ENCODE measurements at regions of chr1 and their contacts with region 1.

Region 1: DNA sequence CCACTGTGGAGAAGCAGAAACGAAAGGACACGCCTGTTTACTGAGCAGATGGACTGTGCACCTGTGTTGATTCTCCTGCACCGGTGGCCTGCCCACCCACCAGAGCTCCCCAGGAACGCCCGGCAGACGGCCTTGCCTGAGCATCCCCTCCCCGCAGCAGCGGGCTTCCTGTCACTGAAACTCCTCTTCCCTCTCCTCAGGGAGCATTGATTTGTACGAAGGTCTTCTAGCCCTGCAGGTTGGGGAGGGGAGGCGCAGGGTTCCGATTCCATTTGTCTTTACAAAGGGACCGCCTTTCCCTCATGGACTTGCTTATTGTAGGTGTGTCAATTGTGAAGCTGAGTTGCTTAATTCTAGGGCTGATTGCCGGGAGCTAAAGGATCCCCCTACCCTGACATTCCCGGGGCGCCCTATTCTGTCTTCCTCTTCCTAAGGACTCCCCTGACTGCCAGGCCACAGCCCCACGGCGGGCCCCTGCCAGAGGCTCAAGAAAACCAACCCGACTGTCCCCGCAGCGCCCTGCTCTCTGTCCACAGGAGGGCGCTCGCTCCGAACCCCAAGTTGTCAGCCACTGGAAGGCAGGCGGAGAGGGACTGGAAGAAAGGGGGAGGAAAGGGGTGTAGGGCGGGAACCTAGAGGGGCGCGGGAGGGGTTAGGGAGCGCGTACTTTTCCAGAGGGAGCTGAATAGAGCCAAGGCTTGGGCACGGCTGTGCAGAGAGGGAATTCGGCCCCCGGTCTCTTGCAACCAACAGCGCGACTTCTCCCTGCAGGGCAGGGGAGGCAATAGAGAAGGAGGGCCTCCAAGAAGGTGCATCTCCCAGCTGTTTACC is 2.8 kb downstream of the S100A6 start:
- DNase-seq: peak; percentile 52
- H3K4me3 ChIP-seq: peak overlapping the region; percentile 98
- H3K27ac ChIP-seq: peak overlapping the region; percentile 96
- H3K27me3 ChIP-seq: no peaks in the 10 kb centered on the region
- CTCF ChIP-seq: peak; percentile 88

Region 2: DNA sequence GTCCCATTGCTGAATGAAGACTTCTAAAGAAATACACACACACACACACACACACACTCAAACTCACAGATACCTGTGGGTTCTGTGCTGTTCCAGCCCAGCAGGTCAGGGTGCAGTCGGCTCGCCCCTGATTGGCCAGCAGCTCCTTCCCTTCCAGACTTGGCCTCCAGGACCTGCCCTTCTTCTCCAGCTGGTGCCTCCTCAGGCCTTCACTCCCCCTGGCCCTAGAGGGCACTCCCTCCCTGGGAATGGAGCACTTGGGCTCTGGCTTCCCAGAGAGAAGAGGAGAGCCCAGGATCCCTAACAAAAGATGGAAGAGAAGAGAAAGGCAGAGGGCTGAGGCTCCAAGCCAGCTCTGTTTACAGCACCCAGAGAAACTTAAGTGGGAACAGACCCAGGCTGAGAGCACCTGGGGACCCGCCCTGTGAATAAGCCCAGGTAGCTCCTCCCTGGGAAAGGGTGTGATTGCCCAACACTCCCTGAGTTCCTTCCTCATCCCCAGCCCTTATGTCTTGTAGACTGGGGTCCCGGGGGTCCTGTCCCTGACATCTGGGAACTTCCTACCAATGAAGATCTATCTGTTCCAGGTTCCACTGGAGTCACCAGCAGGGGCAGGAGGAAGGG is 220.3 kb before region 1 on chr1 and contains the start of gene PGLYRP3:
- CTCF ChIA-PET with region 1: no interaction called
- POLR2A ChIA-PET with region 1: no interaction called
- DNase-seq: no peak
- H3K4me3 ChIP-seq: no peak within 1 kb of the TSS
- H3K27ac ChIP-seq: no peak within 1 kb of the TSS
- H3K27me3 ChIP-seq: no peaks in the 10 kb centered on the region
- CTCF ChIP-seq: no peak
- polyA plus RNA-seq, gene PGLYRP3: not detected in 2 replicates

Region 3: DNA sequence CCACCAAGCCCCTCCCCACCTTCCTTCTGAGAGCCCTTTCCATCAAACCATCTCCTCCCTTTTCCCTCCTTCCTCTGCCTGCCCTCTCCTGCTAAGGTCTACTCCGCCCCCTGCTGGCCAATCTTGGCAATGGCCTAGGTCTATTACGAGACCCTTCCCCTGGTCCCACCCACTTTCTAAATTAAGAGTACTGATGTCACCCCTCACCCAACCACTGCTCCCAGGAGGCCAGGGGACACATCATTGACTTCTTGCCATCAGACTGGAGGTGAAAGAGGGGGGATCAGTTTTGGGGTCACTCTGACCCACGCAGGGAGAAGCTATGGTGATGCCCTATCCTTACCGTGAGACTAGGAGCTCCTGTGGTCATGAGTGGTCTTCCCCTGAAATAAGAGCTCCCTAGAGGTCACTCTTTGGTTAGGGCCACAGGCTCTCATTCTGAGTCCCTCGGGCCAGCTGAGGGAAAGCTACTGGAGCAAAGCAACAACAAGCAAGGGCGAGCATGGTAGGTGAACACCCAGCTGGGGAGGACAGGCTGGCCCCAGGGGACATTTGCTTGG is 37.9 kb before region 1 on chr1:
- CTCF ChIA-PET with region 1: interaction called, 20 read pairs
- POLR2A ChIA-PET with region 1: interaction called, 3 read pairs
- DNase-seq: peak; percentile 29
- H3K4me3 ChIP-seq: no peak overlapping the region
- H3K27ac ChIP-seq: no peak overlapping the region
- H3K27me3 ChIP-seq: peaks cover 10% of the 10 kb centered on the region
- CTCF ChIP-seq: peak; percentile 98

Region 4: GRCh38 chr1:153545067-153546055 is 12.4 kb after region 1 on chr1 and contains the start of gene S100A4:
- CTCF ChIA-PET with region 1: interaction called, 34 read pairs
- POLR2A ChIA-PET with region 1: interaction called, 35 read pairs
- DNase-seq: peak; percentile 71
- H3K4me3 ChIP-seq: peak within 1 kb of the TSS; percentile 31; the same call in 1 of the 2 replicates
- H3K27ac ChIP-seq: peak within 1 kb of the TSS; percentile 80
- H3K27me3 ChIP-seq: no peaks in the 10 kb centered on the region
- CTCF ChIP-seq: no peak
- polyA plus RNA-seq, gene S100A4: 20.0 and 20.7 TPM in 2 replicates

Region 5: GRCh38 chr1:153566440-153567379 is 33.7 kb after region 1 on chr1:
- CTCF ChIA-PET with region 1: interaction called, 165 read pairs
- POLR2A ChIA-PET with region 1: interaction called, 76 read pairs
- DNase-seq: peak; percentile 98
- H3K4me3 ChIP-seq: no peak overlapping the region
- H3K27ac ChIP-seq: peak overlapping the region; percentile 100
- H3K27me3 ChIP-seq: no peaks in the 10 kb centered on the region
- CTCF ChIP-seq: no peak

Region 6: GRCh38 chr1:153626922-153627796 is 94.2 kb after region 1 on chr1 and contains the start of gene S100A13:
- CTCF ChIA-PET with region 1: interaction called, 21 read pairs
- POLR2A ChIA-PET with region 1: interaction called, 15 read pairs
- DNase-seq: peak; percentile 92
- H3K4me3 ChIP-seq: peak within 1 kb of the TSS; percentile 80
- H3K27ac ChIP-seq: peak within 1 kb of the TSS; percentile 92
- H3K27me3 ChIP-seq: no peaks in the 10 kb centered on the region
- CTCF ChIP-seq: peak; percentile 78
- polyA plus RNA-seq, gene S100A13: 310 and 323 TPM in 2 replicates